ENCODE measurements at regions of chr10 and their contacts with region 1.

Region 1: DNA sequence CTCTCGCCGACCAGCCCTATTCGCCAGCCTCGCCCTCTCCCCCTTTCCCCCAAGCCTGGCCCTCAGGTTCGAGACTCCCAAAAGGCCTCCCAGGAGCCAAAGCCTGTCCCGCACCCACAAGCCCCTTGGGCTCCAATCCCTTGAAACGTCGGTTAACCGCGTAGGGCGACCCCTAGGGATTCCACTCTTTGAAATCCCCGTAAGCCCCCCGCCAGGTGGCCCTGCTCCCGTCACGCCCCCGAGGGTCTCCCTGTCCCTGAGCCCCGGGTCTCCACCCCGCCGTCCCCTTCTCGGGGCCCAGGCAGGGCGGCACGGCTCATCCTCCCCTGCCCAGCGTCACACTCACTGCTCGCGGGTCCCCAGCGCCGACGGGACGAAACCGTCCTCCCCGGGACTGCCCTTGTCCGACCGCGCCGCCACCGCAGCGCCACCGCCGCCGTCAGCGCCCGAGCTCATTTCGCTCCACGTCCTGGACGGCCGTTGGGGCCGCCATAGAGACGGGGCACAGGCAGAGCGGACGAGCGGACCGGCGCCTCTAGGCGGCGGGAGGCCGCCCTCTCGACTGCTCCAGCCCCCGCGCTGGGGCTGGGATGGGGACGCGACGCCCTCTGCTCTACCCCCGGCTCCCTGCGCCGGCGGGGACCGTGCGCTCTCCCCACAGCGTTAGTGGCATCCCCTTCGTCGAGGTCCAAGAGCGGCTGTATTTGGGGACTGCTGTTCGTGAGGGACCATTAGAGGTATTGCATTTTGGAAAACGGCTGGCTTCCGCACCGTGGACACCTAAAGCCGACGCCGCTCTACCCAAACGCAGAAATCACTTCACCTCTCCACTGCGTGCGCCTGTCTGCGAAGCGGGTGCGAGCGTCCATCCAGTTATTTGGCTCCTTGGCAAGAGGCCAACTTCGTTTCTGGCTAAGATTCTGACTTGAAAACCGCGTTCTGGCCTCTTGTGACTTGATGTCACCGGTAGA is at the start of gene EEF1AKMT2:
- DNase-seq: peak; percentile 88 to 94
- ATAC-seq: peak; percentile 98 to 99 (median 98)
- H3K4me3 ChIP-seq: peak within 1 kb of the TSS; percentile 99
- H3K27ac ChIP-seq: peak within 1 kb of the TSS; percentile 93
- H3K4me1 ChIP-seq: peaks cover 6% of the 10 kb centered on the region
- H3K27me3 ChIP-seq: no peaks in the 10 kb centered on the region
- CTCF ChIP-seq: peak; percentile 52
- total RNA-seq, gene EEF1AKMT2: 7.6 to 11.9 (median 9.5) TPM

Region 2: GRCh38 chr10:124754227-124754626 is 37.4 kb before region 1 on chr10:
- intact Hi-C with region 1: loop called in 1 of 2 experiments (anchors 5 kb)
- DNase-seq: no peak
- ATAC-seq: no peak
- H3K4me3 ChIP-seq: no peak overlapping the region
- H3K27ac ChIP-seq: no peak overlapping the region
- H3K4me1 ChIP-seq: peaks cover 8% of the 10 kb centered on the region
- H3K27me3 ChIP-seq: no peaks in the 10 kb centered on the region
- CTCF ChIP-seq: no peak

Region 3: GRCh38 chr10:124768781-124769180 is 22.9 kb before region 1 on chr10:
- intact Hi-C with region 1: no loop called
- DNase-seq: no peak
- ATAC-seq: no peak
- H3K4me3 ChIP-seq: no peak overlapping the region
- H3K27ac ChIP-seq: no peak overlapping the region
- H3K4me1 ChIP-seq: no peaks in the 10 kb centered on the region
- H3K27me3 ChIP-seq: no peaks in the 10 kb centered on the region
- CTCF ChIP-seq: no peak

Measured in psoas muscle (tissue), 8 donors.